Sciatic nerve (tissue), 2 donors: ENCODE measurements at regions of chr10 and their contacts with region 1.

Region 1: DNA sequence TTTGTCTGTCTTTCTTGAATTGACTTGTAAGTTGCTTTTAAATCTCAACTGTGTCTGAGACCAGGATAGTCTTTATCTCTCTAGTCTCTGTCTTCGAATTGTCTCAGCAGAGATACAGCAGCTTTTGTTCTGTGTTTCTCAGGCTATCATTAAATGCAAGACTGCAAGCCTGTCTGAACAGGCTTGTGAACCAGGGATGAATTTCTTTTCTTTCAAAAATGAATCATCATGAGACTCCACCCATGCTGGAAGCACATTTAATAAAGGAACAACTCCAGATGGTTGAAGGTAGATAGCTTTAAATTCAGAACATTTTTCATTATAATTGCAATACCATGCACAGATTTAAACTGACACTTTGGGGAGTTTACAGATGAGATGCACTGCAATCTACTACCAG is 155.9 kb downstream of the SEC23IP start:
- DNase-seq: no peak
- ATAC-seq: no peak

Region 2: DNA sequence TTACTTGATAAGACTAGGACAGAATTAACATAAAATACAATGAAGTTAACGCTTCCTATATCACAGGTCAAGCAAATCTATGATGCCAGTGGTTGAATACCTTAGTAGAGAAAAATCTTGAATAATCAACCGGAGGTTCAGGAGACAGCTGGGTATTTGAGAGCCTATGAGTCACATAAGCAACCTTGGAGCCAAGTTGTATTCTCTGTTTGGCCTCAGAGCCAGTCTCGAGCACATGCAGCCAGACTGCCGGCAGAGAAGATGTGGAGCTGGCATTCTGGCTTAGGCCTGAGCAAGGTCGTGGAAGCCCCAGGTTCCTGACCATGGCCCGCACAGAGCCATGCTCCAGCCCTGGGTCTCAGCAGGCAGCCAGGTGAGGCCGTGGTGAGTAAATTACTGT is 1796.6 kb before region 1 on chr10:
- intact Hi-C with region 1: loop called (anchors 5 kb)
- DNase-seq: no peak
- ATAC-seq: no peak

Region 3: GRCh38 chr10:119290291-119291048 is 757.9 kb before region 1 on chr10:
- intact Hi-C with region 1: no loop called
- DNase-seq: no peak
- ATAC-seq: peak; percentile 23